ENCODE measurements at regions of chr3 and their contacts with region 1.

Region 1: DNA sequence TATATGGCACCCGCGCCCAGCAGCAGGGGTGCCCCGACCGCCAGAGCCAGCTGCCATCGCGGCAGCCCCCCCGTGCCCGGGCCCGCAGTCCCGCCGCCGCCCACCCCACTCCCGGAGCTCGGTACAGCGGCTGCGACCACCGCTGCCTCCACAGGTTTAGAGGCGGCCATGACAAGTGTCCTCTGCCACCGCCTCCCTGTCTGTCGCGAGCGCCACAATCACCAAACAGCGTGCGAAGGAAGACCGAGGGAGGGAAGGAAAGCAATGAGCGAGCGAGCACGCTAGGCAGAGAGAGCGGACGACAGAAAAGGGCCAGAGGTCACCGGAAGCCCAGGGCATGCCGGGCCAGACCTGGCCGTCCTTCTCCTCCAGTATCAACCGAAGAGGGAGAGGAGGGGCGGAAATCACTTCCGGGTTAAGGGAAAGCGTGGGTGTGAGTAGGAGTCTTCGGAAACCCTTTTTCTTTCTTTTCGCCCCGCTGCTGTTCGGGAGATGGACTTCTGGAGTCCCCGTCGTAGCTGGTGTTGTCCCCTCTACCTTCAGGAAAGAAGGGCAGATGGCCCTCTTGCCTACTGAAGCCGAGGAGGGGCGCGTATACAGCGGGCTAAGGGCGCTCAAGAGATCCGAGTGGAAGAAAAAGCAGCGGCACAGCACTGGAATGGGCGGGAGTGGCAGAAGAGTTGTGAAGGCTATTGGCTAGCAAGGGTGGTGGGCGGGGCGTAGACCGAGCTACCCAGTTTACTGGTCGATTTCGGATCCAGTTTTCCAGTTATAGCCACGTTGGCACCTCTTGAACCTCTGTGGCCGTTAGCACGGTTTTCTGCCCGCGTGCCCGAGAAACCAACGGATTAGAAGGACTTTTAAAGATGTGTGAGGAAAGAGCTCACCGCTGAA is at the starts of genes LNP1 and TOMM70:
- DNase-seq: peak; percentile 99
- H3K4me3 ChIP-seq: peak within 1 kb of the TSS; percentile 73 to 99 (median 92)
- H3K27ac ChIP-seq: peak within 1 kb of the TSS; percentile 88 to 97 (median 92)
- H3K4me1 ChIP-seq: peaks cover 39 to 62% (median 56%) of the 10 kb centered on the region in 4 donors
- H3K27me3 ChIP-seq: no peaks in the 10 kb centered on the region
- CTCF ChIP-seq: no peak
- EP300 ChIP-seq: no peak
- POLR2A ChIP-seq: no peak
- total RNA-seq, gene LNP1: 1.8 to 3.7 (median 2.4) TPM
- total RNA-seq, gene TOMM70: 43.4 to 50.6 (median 46.4) TPM

Region 2: GRCh38 chr3:99817437-99818240 is 583.4 kb before region 1 on chr3 and contains the start of gene CMSS1:
- intact Hi-C with region 1: loop called (anchors 5 kb)
- DNase-seq: peak; percentile 98
- H3K4me3 ChIP-seq: peak within 1 kb of the TSS; percentile 73 to 87 (median 74)
- H3K27ac ChIP-seq: peak within 1 kb of the TSS; percentile 89 to 91 (median 90)
- H3K4me1 ChIP-seq: peaks cover 6 to 36% (median 24%) of the 10 kb centered on the region in 4 donors
- H3K27me3 ChIP-seq: no peaks in the 10 kb centered on the region
- CTCF ChIP-seq: peak in 2 of 3 experiments; percentile 21 to 44
- EP300 ChIP-seq: no peak
- POLR2A ChIP-seq: peak; percentile 67
- total RNA-seq, gene CMSS1: 11.2 to 16.3 (median 14.1) TPM